ENCODE measurements at regions of chr17 and their contacts with region 1.

Region 1: GRCh38 chr17:43634591-43635125 is 27.1 kb downstream of the MEOX1 start:
- DNase-seq: no peak

Region 2: GRCh38 chr17:43517615-43518386 is 116.9 kb before region 1 on chr17:
- intact Hi-C with region 1: no loop called
- DNase-seq: no peak

Region 3: DNA sequence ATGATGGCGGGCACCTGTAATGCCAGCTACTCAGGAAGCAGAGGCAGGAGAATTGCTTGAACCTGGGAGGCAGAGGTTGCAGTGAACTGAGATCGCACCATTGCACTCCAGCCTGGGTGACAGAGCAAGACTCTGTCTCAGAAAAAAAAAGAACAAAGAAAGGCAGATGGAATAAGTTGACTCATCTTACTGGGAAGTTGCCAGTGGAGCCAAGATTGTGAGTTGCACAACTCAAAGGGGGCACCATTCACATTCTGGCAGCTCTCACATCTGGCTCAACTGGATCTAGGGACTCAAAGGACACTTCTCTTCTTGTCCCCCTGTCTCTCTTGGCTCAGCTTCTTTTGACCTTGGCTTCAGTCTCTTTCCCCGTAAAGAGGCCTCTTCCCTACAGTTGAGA is 34.8 kb before region 1 on chr17:
- intact Hi-C with region 1: loop called (anchors 5 kb)
- DNase-seq: no peak

Region 4: DNA sequence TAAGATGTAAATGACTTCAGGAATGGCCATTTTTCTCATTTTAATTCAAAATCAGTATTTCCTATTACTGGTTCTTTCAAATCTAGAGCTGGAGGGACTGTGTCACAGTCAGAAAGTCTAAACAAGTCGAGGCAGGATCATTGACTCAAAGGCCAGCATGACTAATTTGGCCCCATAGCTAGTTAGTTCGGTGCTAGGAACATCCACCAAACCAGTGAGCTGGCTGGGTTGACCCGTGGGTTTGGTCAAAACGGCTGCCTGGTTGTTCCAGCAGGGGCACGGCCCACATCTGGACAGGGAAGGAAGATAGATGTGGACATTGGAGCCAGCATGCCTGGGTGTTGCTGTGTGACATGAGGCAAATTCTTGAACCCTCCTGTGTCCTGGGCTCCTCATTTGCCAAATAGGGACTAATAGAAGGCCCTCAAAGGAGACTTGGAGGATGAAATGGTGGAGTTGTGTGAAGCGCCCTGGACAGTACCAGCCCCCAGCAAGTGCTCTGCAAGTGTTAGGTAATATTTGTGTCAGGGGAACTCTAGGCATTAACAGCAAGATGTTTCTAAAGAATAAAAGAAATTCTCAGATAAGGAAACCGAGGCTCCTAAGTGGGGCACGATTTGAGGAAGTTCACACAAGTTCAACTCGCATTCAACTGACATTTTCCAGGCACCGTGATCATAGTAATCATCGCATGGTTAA is 19.2 kb before region 1 on chr17:
- intact Hi-C with region 1: no loop called
- DNase-seq: no peak

Region 5: GRCh38 chr17:43661699-43662412 is 27.2 kb after region 1 on chr17 and contains the start of gene MEOX1:
- intact Hi-C with region 1: no loop called
- DNase-seq: no peak
- total RNA-seq, gene MEOX1: 19.8 TPM

Region 6: GRCh38 chr17:43673516-43674323 is 39.1 kb after region 1 on chr17:
- intact Hi-C with region 1: loop called (anchors 5 kb)
- DNase-seq: peak; percentile 88

Measured in cardiac septum (tissue), 1 donor.